ENCODE measurements at regions of chr12 and their contacts with region 1.

Region 1: GRCh38 chr12:46124848-46125619 is 134.7 kb upstream of the SCAF11 start:
- DNase-seq: peak; percentile 42
- CTCF ChIP-seq: peak; percentile 71

Region 2: DNA sequence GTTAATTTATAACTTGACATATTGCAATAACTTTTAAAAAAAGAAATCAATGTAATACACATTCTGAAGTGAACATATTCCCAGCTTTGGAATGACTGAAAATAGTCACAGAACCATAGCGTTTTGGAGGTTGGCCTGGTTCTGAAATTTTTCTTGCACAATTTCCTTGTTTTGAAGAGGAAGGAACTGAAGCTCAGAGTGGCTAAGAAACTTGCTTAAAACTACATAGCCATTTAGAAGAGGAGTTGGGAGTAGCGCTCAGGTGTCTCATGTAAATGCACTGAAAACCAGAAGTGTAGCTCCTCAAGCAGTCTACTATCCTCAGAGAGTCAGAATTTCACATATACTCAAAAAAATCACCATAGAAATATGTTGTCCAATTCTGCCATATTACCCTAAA is 102.6 kb after region 1 on chr12:
- in situ Hi-C with region 1: no loop called
- DNase-seq: no peak
- CTCF ChIP-seq: no peak

Region 3: GRCh38 chr12:46573347-46573658 is 448.3 kb after region 1 on chr12:
- in situ Hi-C with region 1: no loop called
- DNase-seq: no peak
- CTCF ChIP-seq: no peak

Region 4: DNA sequence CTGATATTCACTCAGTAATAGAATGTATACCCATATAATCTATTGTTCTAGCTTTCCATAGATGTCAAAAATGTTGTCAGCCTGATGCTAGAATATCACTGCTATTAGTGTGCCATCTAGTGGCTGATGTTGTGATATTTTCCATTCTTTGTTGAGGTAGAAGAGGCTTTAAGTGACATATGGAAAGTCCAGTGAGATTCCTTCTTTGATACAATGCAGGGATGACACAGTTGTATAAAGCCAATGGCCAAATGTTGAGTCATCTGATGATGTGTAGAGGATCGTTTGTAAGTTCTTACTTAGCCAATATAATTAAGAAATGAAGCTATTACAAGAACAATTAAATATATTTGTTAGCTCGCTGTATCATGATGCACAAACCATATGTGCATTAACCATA is 896.3 kb after region 1 on chr12:
- in situ Hi-C with region 1: loop called (anchors 25 kb)
- DNase-seq: peak; percentile 23
- CTCF ChIP-seq: peak; percentile 42

Region 5: GRCh38 chr12:47085815-47086252 is 960.8 kb after region 1 on chr12:
- in situ Hi-C with region 1: no loop called
- DNase-seq: no peak
- CTCF ChIP-seq: no peak

Measured in GM13976 (cell line).